PC-9 (cell line): ENCODE measurements at regions of chr3 and their contacts with region 1.

Region 1: DNA sequence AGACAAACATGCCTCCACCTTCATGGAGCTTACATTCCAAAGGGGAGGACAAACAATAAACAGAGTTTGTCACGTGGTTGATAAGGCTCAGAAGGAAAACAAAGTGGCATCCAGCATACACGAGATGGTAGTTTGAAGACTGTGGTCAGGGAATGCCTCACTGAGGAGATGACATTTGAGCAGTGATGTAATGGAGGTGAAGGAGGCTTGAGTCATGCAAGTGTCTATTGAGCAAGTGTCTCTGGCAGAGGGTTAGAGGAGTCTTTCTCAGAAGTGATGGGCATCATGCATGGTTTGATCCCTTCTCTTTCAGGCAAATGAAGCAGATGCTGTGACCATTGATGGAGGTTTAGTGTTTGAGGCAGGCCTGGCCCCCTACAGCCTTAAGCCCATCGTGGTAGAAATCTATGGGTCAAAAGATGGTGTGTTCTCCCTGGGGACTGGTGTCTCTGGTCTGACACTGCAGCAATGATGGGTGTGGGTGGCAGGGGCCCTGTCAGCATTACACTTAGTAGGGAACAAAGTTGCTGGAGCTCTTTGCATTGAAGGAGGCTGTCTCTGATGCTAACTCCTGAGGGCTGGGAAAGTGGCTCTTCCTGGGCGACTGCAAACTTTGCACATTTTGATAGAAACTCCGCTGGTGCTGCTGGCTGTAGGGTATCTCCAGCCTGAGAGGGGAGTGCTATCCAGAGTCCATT is 29.8 kb upstream of the TOPBP1 start:
- DNase-seq: no peak
- H3K4me3 ChIP-seq: no peak overlapping the region
- H3K27ac ChIP-seq: no peak overlapping the region
- H3K4me1 ChIP-seq: no peaks in the 10 kb centered on the region
- H3K27me3 ChIP-seq: no peaks in the 10 kb centered on the region
- CTCF ChIP-seq: no peak

Region 2: GRCh38 chr3:133248389-133248788 is 443.2 kb before region 1 on chr3:
- CTCF ChIA-PET with region 1: interaction called, 11 read pairs
- POLR2A ChIA-PET with region 1: no interaction called
- intact Hi-C with region 1: no loop called
- DNase-seq: no peak
- H3K4me3 ChIP-seq: no peak overlapping the region
- H3K27ac ChIP-seq: no peak overlapping the region
- H3K4me1 ChIP-seq: no peaks in the 10 kb centered on the region
- H3K27me3 ChIP-seq: peaks cover 11% of the 10 kb centered on the region; the same call in 1 of the 2 replicates
- CTCF ChIP-seq: no peak